GM12878 (cell line): ENCODE measurements at regions of chr16 and their contacts with region 1.

Region 1: GRCh38 chr16:79047229-79047983 is 553.1 kb downstream of the MAF start:
- DNase-seq: no peak
- ATAC-seq: peak; percentile 61; the same call in 2 of the 3 replicates
- H3K4me3 ChIP-seq: no peak overlapping the region
- H3K27ac ChIP-seq: no peak overlapping the region
- H3K4me1 ChIP-seq: no peaks in the 10 kb centered on the region
- H3K27me3 ChIP-seq: no peaks in the 10 kb centered on the region; a peak in 2 of 4 replicates
- CTCF ChIP-seq: peak; percentile 39 to 61 (median 50); a peak in 4 of 6 replicates
- EP300 ChIP-seq: no peak
- POLR2A ChIP-seq: no peak
- RAD21 ChIP-seq: peak; percentile 70

Region 2: GRCh38 chr16:78503602-78504001 is 543.8 kb before region 1 on chr16:
- CTCF ChIA-PET with region 1: no interaction called
- POLR2A ChIA-PET with region 1: no interaction called
- RAD21 ChIA-PET with region 1: no interaction called
- SMC1A ChIA-PET with region 1: no interaction called
- in situ Hi-C with region 1: no loop called
- intact Hi-C with region 1: loop called (anchors 10 kb)
- DNase-seq: no peak
- ATAC-seq: peak; percentile 55; the same call in 2 of the 3 replicates
- H3K4me3 ChIP-seq: no peak overlapping the region
- H3K27ac ChIP-seq: no peak overlapping the region
- H3K4me1 ChIP-seq: peaks cover 3% of the 10 kb centered on the region
- H3K27me3 ChIP-seq: no peaks in the 10 kb centered on the region
- CTCF ChIP-seq: peak; percentile 59 to 68 (median 64); a peak in 5 of 6 replicates
- EP300 ChIP-seq: no peak
- POLR2A ChIP-seq: no peak
- RAD21 ChIP-seq: peak; percentile 71

Region 3: GRCh38 chr16:78705694-78706093 is 341.7 kb before region 1 on chr16:
- CTCF ChIA-PET with region 1: no interaction called
- POLR2A ChIA-PET with region 1: no interaction called
- RAD21 ChIA-PET with region 1: no interaction called
- SMC1A ChIA-PET with region 1: interaction called, 3 read pairs
- in situ Hi-C with region 1: no loop called
- intact Hi-C with region 1: loop called (anchors 2 kb)
- DNase-seq: peak; percentile 9
- ATAC-seq: peak; percentile 61
- H3K4me3 ChIP-seq: no peak overlapping the region
- H3K27ac ChIP-seq: no peak overlapping the region
- H3K4me1 ChIP-seq: no peaks in the 10 kb centered on the region
- H3K27me3 ChIP-seq: no peaks in the 10 kb centered on the region
- CTCF ChIP-seq: peak; percentile 51 to 58 (median 51); a peak in 4 of 6 replicates
- EP300 ChIP-seq: no peak
- POLR2A ChIP-seq: no peak
- RAD21 ChIP-seq: peak; percentile 88

Region 4: GRCh38 chr16:78925083-78925767 is 122.2 kb before region 1 on chr16:
- CTCF ChIA-PET with region 1: no interaction called
- POLR2A ChIA-PET with region 1: no interaction called
- RAD21 ChIA-PET with region 1: no interaction called
- SMC1A ChIA-PET with region 1: no interaction called
- in situ Hi-C with region 1: no loop called
- intact Hi-C with region 1: loop called (anchors 1 kb)
- DNase-seq: no peak
- ATAC-seq: peak; percentile 87
- H3K4me3 ChIP-seq: no peak overlapping the region
- H3K27ac ChIP-seq: no peak overlapping the region
- H3K4me1 ChIP-seq: no peaks in the 10 kb centered on the region
- H3K27me3 ChIP-seq: no peaks in the 10 kb centered on the region
- CTCF ChIP-seq: peak; percentile 34 to 50 (median 42); a peak in 4 of 6 replicates
- EP300 ChIP-seq: no peak
- POLR2A ChIP-seq: no peak
- RAD21 ChIP-seq: peak; percentile 51

Region 5: DNA sequence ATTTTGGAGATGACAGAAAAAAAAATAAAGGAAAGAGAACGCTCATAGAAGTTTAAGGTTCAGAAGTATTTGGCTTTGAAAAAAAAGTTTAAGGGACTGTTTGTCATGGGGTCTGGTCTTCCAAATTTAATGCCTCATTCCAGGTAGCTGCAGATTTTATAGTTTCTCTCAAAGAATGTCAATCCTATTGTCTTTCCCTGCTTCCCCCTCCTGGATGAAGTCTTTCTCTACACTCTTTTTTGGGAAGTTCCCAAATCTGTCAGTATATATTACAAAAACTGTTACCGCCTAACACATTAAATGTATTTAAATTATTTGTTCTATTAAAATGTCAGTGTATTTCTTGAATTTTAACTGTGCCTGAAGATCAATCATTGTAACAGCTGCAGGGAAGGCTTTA is 95.6 kb after region 1 on chr16:
- CTCF ChIA-PET with region 1: no interaction called
- POLR2A ChIA-PET with region 1: no interaction called
- RAD21 ChIA-PET with region 1: no interaction called
- SMC1A ChIA-PET with region 1: no interaction called
- in situ Hi-C with region 1: no loop called
- intact Hi-C with region 1: no loop called
- DNase-seq: no peak
- ATAC-seq: no peak
- H3K4me3 ChIP-seq: no peak overlapping the region
- H3K27ac ChIP-seq: no peak overlapping the region
- H3K4me1 ChIP-seq: no peaks in the 10 kb centered on the region
- H3K27me3 ChIP-seq: no peaks in the 10 kb centered on the region; a peak in 2 of 4 replicates
- CTCF ChIP-seq: no peak
- EP300 ChIP-seq: no peak
- POLR2A ChIP-seq: no peak
- RAD21 ChIP-seq: no peak